ENCODE measurements at regions of chr3 and their contacts with region 1.

Region 1: DNA sequence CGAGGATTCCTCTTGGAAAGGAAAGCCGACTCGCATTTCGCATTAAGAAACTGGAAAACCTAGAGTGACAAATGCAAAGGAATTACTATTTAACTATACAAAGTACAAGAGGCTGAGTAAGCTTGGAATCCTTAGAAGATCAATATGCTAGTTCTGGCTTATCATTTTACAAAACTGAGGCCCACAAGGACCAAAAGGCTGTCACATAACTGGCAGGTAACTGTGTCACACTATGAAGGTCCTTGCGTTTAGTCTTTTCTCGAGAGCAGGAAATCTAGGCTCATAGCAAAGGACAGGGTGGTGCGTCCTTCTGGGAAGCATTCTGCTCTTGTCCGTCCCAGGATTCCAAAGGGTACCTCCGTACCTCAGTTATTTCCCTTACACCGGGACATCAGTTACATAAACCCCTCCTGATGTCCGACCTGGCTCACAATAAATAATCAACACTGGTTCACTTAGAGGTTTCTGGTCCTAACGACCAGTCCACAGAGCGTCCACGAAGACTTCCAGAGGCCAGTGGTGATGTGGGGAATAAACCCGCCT is 577 bp downstream of the RPL24 start:
- DNase-seq: peak in 4 of 14 experiments; percentile 7 to 40 (median 26)
- ATAC-seq: peak; percentile 5
- H3K4me3 ChIP-seq: peak overlapping the region; percentile 91
- H3K4me3 Mint-ChIP-seq: peak overlapping the region; percentile 99
- H3K27ac ChIP-seq: peak overlapping the region; percentile 87 to 94
- H3K27ac Mint-ChIP-seq: peak overlapping the region; percentile 99
- H3K4me1 ChIP-seq: peaks cover 30% of the 10 kb centered on the region
- H3K4me1 Mint-ChIP-seq: peaks cover 49% of the 10 kb centered on the region
- H3K27me3 ChIP-seq: no peaks in the 10 kb centered on the region
- H3K27me3 Mint-ChIP-seq: no peaks in the 10 kb centered on the region
- CTCF ChIP-seq: no peak

Region 2: GRCh38 chr3:101762041-101762646 is 76.2 kb after region 1 on chr3:
- CTCF ChIA-PET with region 1: no interaction called
- POLR2A ChIA-PET with region 1: no interaction called
- intact Hi-C with region 1: loop called in 1 of 2 experiments (anchors 5 kb)
- DNase-seq: no peak
- ATAC-seq: no peak
- H3K4me3 ChIP-seq: no peak overlapping the region
- H3K4me3 Mint-ChIP-seq: no peak overlapping the region
- H3K27ac ChIP-seq: no peak overlapping the region
- H3K27ac Mint-ChIP-seq: no peak overlapping the region
- H3K4me1 ChIP-seq: no peaks in the 10 kb centered on the region
- H3K4me1 Mint-ChIP-seq: peaks cover 10% of the 10 kb centered on the region
- H3K27me3 ChIP-seq: no peaks in the 10 kb centered on the region
- H3K27me3 Mint-ChIP-seq: no peaks in the 10 kb centered on the region
- CTCF ChIP-seq: no peak

Region 3: DNA sequence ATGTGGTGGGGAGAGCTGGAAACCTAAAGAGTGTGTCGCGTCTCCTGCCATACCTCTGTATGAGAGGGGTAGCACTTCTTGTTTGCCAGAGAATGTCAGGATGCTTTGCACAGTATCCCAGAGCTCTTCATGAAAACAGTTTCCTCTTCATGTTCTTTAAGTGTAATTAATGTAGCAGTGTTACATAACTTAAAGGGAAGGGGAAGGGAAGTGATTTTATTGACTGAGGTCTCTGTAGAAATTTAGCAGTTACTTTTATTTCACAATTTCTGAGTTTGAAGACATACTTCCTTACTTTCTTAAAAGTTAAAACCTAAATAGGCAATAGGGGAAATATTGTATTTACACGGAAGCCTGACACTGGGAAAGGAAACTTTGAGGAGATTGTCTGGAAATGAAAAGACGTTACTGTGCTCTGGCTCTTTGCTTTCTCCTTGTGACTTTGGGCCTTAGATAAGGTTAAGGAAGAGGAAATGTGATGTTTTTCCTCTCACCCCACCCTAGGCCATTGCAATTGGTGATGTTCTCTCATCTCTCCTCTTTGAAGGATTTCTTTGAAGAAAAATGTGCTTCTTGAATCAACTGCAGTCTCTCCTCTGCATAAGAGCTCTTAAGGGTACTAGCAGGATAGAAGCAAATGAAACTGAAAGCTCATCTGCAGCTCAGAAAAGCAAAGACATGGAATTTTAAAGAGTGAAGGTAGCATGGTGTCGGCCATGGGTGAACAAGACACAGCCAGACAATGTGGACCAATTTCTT is 99.1 kb after region 1 on chr3:
- CTCF ChIA-PET with region 1: no interaction called
- POLR2A ChIA-PET with region 1: interaction called, 17 read pairs
- intact Hi-C with region 1: no loop called
- DNase-seq: peak in 3 of 14 experiments; percentile 52 to 63 (median 54)
- ATAC-seq: peak; percentile 89
- H3K4me3 ChIP-seq: peak overlapping the region; percentile 30
- H3K4me3 Mint-ChIP-seq: peak overlapping the region; percentile 79
- H3K27ac ChIP-seq: peak overlapping the region; percentile 64 to 65
- H3K27ac Mint-ChIP-seq: peak overlapping the region; percentile 92
- H3K4me1 ChIP-seq: peaks cover 32% of the 10 kb centered on the region
- H3K4me1 Mint-ChIP-seq: peaks cover 72% of the 10 kb centered on the region
- H3K27me3 ChIP-seq: no peaks in the 10 kb centered on the region
- H3K27me3 Mint-ChIP-seq: no peaks in the 10 kb centered on the region
- CTCF ChIP-seq: no peak

Region 4: GRCh38 chr3:101836652-101837598 is 151.0 kb after region 1 on chr3:
- CTCF ChIA-PET with region 1: no interaction called
- POLR2A ChIA-PET with region 1: no interaction called
- intact Hi-C with region 1: no loop called
- DNase-seq: peak in 1 of 14 experiments; percentile 53
- ATAC-seq: no peak
- H3K4me3 ChIP-seq: no peak overlapping the region
- H3K4me3 Mint-ChIP-seq: no peak overlapping the region
- H3K27ac ChIP-seq: no peak overlapping the region
- H3K27ac Mint-ChIP-seq: no peak overlapping the region
- H3K4me1 ChIP-seq: peaks cover 10% of the 10 kb centered on the region
- H3K4me1 Mint-ChIP-seq: peaks cover 34% of the 10 kb centered on the region
- H3K27me3 ChIP-seq: no peaks in the 10 kb centered on the region
- H3K27me3 Mint-ChIP-seq: no peaks in the 10 kb centered on the region
- CTCF ChIP-seq: no peak

Measured in CD4-positive, alpha-beta T cell (primary cell).